ENCODE measurements at regions of chr4 and their contacts with region 1.

Region 1: GRCh38 chr4:105305019-105305836 is 158.6 kb downstream of the TET2 start:
- DNase-seq: no peak
- H3K4me3 ChIP-seq: no peak overlapping the region
- H3K27ac ChIP-seq: no peak overlapping the region
- H3K4me1 ChIP-seq: no peaks in the 10 kb centered on the region
- H3K27me3 ChIP-seq: no peaks in the 10 kb centered on the region
- CTCF ChIP-seq: no peak
- EP300 ChIP-seq: no peak
- POLR2A ChIP-seq: no peak

Region 2: DNA sequence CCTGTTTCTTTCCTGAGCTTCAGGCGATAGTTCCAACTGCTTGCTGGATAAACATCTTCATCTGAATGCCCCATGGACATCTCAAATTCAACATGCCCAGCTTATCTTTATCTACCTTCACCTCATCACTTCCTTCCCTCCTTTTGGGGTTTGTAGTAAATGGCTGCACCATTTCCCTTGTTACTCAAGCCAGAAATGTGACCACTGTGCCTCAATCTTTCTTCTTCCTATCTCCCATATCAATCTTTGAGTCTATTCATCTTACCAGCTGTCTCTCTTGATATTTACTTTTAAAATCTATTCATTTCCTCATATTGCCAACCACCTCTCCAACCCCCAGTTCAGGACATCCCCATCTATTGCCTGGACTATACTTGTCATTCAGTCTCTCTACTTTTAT is 13.3 kb after region 1 on chr4:
- intact Hi-C with region 1: loop called (anchors 2 kb)
- DNase-seq: no peak
- H3K4me3 ChIP-seq: no peak overlapping the region
- H3K27ac ChIP-seq: no peak overlapping the region
- H3K4me1 ChIP-seq: no peaks in the 10 kb centered on the region
- H3K27me3 ChIP-seq: no peaks in the 10 kb centered on the region
- CTCF ChIP-seq: no peak
- EP300 ChIP-seq: no peak
- POLR2A ChIP-seq: no peak

Region 3: GRCh38 chr4:105406924-105407323 is 101.7 kb after region 1 on chr4:
- intact Hi-C with region 1: no loop called
- DNase-seq: no peak
- H3K4me3 ChIP-seq: no peak overlapping the region
- H3K27ac ChIP-seq: no peak overlapping the region
- H3K4me1 ChIP-seq: no peaks in the 10 kb centered on the region
- H3K27me3 ChIP-seq: no peaks in the 10 kb centered on the region
- CTCF ChIP-seq: no peak
- EP300 ChIP-seq: no peak
- POLR2A ChIP-seq: no peak